Spleen (tissue), 13 donors: ENCODE measurements at regions of chr1 and their contacts with region 1.

Region 1: GRCh38 chr1:8913111-8913856 is 32.4 kb upstream of the CA6 start:
- DNase-seq: no peak
- H3K4me3 ChIP-seq: no peak overlapping the region
- H3K27ac ChIP-seq: no peak overlapping the region
- H3K4me1 ChIP-seq: peaks cover 0 to 17% (median 4%) of the 10 kb centered on the region in 6 donors
- H3K27me3 ChIP-seq: peaks cover 0 to 5% (median 0%) of the 10 kb centered on the region in 7 donors
- CTCF ChIP-seq: no peak
- POLR2A ChIP-seq: no peak

Region 2: GRCh38 chr1:8899076-8899475 is 14.2 kb before region 1 on chr1:
- intact Hi-C with region 1: no loop called
- DNase-seq: no peak
- H3K4me3 ChIP-seq: no peak overlapping the region
- H3K27ac ChIP-seq: peak overlapping the region in 3 of 8 donors; percentile 3 to 57 (median 57)
- H3K4me1 ChIP-seq: peaks cover 0 to 20% (median 0%) of the 10 kb centered on the region in 6 donors
- H3K27me3 ChIP-seq: no peaks in the 10 kb centered on the region
- CTCF ChIP-seq: no peak
- POLR2A ChIP-seq: no peak

Region 3: GRCh38 chr1:8987881-8988617 is 74.8 kb after region 1 on chr1:
- intact Hi-C with region 1: loop called (anchors 2 kb)
- DNase-seq: peak; percentile 90
- H3K4me3 ChIP-seq: peak overlapping the region in 1 of 8 donors; percentile 41
- H3K27ac ChIP-seq: peak overlapping the region in 4 of 8 donors; percentile 61 to 65 (median 62)
- H3K4me1 ChIP-seq: peaks cover 0 to 38% (median 30%) of the 10 kb centered on the region in 6 donors
- H3K27me3 ChIP-seq: no peaks in the 10 kb centered on the region
- CTCF ChIP-seq: peak; percentile 78 to 95 (median 91)
- POLR2A ChIP-seq: no peak